Activated T-helper 1 cell treated with anti-CD3 and anti-CD28 coated beads, Interleukin-12 subunit alpha, Interleukin-12 subunit beta, Interleukin-2, Interleukin-4 antibody, amounts not matched to agents 30 ng/mL and 10 ng/mL and 1 ng/mL, durations not matched to agents 14 hours and 24 hours and 36 hours (primary cell): ENCODE measurements at regions of chr2 and their contacts with region 1.

Region 1: DNA sequence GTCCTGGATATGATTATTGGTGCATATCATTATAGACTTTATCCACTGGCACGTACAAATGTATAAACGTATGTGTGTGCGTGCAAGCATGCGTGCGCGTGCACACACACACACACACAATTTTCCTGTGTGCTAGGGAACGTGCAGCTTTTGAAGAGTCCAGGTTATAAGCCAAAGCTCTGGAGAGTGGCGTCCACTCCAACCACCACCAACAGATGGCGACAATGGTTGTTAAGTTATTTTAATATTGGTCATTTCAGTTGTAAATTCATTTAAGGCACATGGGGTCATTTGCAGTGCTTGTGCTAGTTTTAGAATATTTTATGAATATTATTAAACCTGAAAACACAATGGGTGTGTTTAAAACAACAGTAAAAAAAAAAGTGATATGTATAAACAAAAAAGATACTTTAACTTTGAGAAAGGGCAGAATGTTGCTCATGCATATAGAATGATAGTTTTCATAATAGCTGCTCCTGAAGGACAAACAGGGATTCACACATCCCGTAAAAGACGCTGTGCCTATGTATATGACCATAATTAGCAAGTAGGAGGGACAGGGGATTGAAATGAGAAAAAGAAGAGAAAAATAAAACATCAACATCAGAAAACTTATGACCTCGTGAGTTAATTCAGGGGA is 124.2 kb upstream of the ITGB6 start:
- DNase-seq: no peak
- H3K4me3 Mint-ChIP-seq: no peak overlapping the region
- H3K27ac Mint-ChIP-seq: peak overlapping the region; percentile 35
- H3K4me1 Mint-ChIP-seq: peaks cover 65% of the 10 kb centered on the region
- H3K27me3 Mint-ChIP-seq: peaks cover 6% of the 10 kb centered on the region

Region 2: DNA sequence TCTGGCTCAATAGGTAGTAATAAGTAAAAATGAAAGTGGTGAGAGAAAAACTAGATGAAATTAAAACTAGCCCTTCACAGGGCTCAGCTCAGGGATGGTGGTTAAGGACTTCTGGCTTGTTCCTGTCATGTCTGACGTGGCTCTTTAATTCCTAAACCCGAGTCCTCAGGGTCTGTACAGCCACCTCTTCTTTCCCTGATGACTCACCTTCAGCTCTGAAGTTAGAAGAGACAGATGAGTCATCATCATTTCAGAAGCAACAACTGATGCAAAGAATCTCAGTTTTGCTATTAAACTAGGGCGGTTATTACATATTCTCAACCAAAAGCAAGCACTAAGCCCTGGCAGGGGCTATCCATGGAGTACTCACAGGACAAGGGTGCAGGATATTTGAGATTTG is 100.2 kb before region 1 on chr2:
- intact Hi-C with region 1: loop called (anchors 1 kb)
- DNase-seq: peak; percentile 23
- H3K4me3 Mint-ChIP-seq: peak overlapping the region; percentile 39
- H3K27ac Mint-ChIP-seq: peak overlapping the region; percentile 32
- H3K4me1 Mint-ChIP-seq: peaks cover 56% of the 10 kb centered on the region
- H3K27me3 Mint-ChIP-seq: peaks cover 5% of the 10 kb centered on the region

Region 3: GRCh38 chr2:160301420-160301819 is 22.9 kb before region 1 on chr2:
- intact Hi-C with region 1: loop called (anchors 1 kb)
- DNase-seq: no peak
- H3K4me3 Mint-ChIP-seq: no peak overlapping the region
- H3K27ac Mint-ChIP-seq: peak overlapping the region; percentile 37
- H3K4me1 Mint-ChIP-seq: peaks cover 49% of the 10 kb centered on the region
- H3K27me3 Mint-ChIP-seq: no peaks in the 10 kb centered on the region

Region 4: DNA sequence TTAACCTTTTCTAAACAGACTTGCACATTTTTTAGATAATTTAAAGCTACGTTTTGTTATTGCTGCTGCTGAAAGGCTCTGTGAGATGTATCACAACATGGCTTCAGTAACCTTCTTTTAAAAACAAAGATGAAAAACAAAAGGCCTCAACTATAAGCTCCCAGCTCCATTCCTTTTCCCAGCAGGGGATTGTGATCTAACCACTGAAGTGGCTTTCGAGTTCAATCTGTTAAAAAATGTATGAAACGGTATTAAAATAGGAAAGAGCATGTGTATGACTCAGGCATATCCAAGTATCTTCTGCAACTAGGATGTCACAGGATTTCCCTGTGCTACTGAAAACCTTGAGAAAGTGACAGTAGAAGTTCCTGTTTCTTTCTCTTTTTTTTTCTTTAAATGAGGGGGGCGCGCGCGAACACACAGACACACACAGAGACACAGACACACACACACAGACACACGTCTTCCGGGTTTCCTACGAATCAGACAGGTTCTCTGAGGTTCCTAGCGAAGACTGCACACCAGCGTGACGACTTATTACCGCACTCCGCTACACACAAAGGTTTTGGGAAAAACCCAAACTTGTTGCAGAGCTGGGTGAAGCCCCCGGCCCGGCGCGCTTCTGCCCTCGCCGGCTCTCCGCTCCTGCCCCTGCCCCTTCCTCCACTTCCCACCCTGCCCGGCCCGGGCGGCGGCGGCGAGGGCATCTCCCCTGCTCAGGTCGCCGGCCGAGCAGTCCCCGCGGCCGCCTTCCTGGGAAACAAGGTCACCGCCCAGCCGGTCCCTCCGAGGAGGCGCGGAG is 82.5 kb after region 1 on chr2:
- intact Hi-C with region 1: loop called (anchors 1 kb)
- DNase-seq: peak; percentile 66
- H3K4me3 Mint-ChIP-seq: peak overlapping the region; percentile 90
- H3K27ac Mint-ChIP-seq: peak overlapping the region; percentile 92
- H3K4me1 Mint-ChIP-seq: peaks cover 83% of the 10 kb centered on the region
- H3K27me3 Mint-ChIP-seq: no peaks in the 10 kb centered on the region

Region 5: DNA sequence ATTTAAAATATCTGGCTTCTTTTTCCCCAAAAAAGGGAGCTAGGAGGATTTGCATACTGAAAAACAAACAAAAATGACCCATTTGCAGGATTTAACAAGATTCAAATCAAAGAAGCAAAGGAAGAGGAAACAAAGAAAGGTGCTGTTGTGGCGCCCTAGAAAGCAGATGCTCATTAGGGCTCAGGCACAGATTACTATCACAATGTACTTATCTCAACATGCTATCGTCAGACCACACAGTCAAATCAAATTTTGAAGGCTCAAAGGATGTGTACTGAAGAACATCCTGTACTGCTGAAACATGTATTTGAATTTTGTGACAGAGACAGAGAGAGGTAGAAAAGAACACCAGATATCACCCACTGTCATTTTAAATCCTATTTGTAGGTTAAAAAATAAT is 158.4 kb after region 1 on chr2:
- intact Hi-C with region 1: loop called (anchors 2 kb)
- DNase-seq: peak; percentile 11
- H3K4me3 Mint-ChIP-seq: peak overlapping the region; percentile 5
- H3K27ac Mint-ChIP-seq: peak overlapping the region; percentile 59
- H3K4me1 Mint-ChIP-seq: peaks cover 59% of the 10 kb centered on the region
- H3K27me3 Mint-ChIP-seq: no peaks in the 10 kb centered on the region

Region 6: DNA sequence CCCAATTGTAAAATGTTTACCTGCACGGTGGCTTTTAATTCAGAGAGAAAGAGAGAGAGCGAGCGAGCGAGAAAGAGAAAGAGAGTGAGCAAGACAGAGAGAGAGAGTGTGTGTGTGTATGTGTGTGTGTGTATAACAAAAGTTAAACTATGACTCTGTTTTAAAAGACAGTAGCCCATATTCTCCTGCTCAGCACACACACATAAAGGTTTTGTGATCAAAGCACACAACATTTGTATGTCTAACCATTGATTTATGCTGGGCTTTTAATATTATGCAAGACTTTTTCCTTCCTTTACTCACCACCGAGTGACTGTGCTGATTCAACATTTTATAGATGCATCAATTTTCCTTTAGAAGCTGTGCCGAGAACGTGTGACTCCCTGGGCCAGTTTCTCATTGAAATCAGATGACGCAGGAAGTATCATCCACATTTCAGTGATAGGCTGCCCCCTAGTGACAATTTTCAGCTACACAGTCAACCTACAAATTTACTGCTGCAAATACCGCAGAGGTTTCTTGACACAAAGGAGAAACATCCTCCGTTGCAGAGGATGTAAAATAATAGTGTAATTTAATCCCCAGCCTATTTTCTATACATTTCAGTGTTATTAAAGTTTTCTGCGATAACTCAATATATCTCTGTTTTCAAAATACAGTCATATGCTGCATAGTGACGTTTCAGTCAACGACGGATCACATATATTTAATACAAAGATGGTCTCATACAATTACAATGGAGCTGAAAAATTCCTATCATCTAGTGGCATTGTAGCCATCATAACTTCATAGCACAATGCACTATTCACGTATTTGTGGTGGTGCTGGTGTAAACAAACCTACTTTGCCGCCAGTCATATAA is 670.1 kb after region 1 on chr2:
- intact Hi-C with region 1: loop called (anchors 1 kb)
- DNase-seq: peak; percentile 57
- H3K4me3 Mint-ChIP-seq: no peak overlapping the region
- H3K27ac Mint-ChIP-seq: no peak overlapping the region
- H3K4me1 Mint-ChIP-seq: peaks cover 11% of the 10 kb centered on the region
- H3K27me3 Mint-ChIP-seq: peaks cover 2% of the 10 kb centered on the region